Transverse colon (tissue), 4 donors: ENCODE measurements at regions of chr3 and their contacts with region 1.

Region 1: DNA sequence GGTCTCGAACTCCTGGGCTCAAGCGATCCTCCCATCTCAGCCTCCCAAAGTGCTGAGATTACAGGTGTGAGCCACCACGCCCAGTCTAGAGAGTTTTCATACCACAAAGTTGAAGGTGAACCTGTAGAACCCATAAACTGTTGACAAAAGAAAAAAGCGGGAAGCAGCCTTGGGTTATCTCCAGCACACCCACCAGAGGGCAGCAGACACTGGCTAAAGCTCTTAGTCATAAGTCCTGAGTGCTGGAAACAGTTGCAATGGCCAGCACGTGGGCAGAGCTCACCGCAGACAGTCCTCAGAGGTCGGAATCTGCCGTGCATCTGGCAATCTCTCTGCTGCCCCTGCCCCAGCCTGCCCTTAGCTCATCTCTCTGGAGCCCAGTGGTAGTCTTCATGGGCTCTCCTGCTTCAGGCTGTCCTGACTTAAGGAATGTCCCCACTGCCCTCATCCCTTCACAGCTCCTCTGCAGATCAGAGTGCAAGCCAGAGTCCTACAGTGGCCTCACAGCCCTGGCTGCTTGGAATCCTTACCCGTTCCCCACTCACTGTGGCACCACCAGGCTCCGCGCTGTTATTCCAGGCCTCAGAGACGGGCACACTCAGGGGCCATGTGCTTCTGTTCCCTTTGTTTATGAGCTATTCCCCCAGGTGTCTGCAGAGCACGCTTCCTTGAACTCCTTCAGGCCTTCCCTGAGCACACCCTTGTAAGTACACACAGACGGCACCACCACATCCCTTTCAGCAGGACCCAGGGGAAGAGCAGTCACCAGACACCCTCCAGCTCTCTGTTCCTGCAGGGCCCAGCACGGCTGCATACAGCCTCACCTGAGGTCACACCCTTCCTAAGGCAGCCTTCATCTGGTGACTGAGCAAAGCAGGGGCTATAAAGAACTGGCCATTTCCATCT is 8.8 kb upstream of the ELP6 start:
- DNase-seq: peak; percentile 86
- H3K4me3 ChIP-seq: no peak overlapping the region
- H3K27ac ChIP-seq: no peak overlapping the region
- H3K4me1 ChIP-seq: peaks cover 0 to 6% (median 5%) of the 10 kb centered on the region in 4 donors
- H3K27me3 ChIP-seq: no peaks in the 10 kb centered on the region
- CTCF ChIP-seq: peak; percentile 85 to 97 (median 90)
- EP300 ChIP-seq: no peak
- POLR2A ChIP-seq: no peak

Region 2: GRCh38 chr3:47781685-47782445 is 259.5 kb after region 1 on chr3 and contains the start of gene SMARCC1:
- in situ Hi-C with region 1: loop called in 3 of 4 experiments (anchors 5 to 10 kb)
- intact Hi-C with region 1: no loop called
- DNase-seq: peak; percentile 99
- H3K4me3 ChIP-seq: peak within 1 kb of the TSS; percentile 88 to 95 (median 94)
- H3K27ac ChIP-seq: peak within 1 kb of the TSS; percentile 94 to 99 (median 96)
- H3K4me1 ChIP-seq: peaks cover 10 to 34% (median 28%) of the 10 kb centered on the region in 4 donors
- H3K27me3 ChIP-seq: no peaks in the 10 kb centered on the region
- CTCF ChIP-seq: peak in 4 of 5 experiments; percentile 8 to 48 (median 27)
- EP300 ChIP-seq: peak; percentile 5
- POLR2A ChIP-seq: peak; percentile 96
- total RNA-seq, gene SMARCC1: 21.3 to 70.8 (median 45.0) TPM

Region 3: GRCh38 chr3:47791193-47791855 is 269.0 kb after region 1 on chr3:
- in situ Hi-C with region 1: loop called (anchors 5 to 10 kb)
- intact Hi-C with region 1: loop called (anchors 2 kb)
- DNase-seq: no peak
- H3K4me3 ChIP-seq: no peak overlapping the region
- H3K27ac ChIP-seq: no peak overlapping the region
- H3K4me1 ChIP-seq: peaks cover 0 to 9% (median 0%) of the 10 kb centered on the region in 4 donors
- H3K27me3 ChIP-seq: no peaks in the 10 kb centered on the region
- CTCF ChIP-seq: no peak
- EP300 ChIP-seq: no peak
- POLR2A ChIP-seq: no peak

Region 4: GRCh38 chr3:48023377-48023776 is 501.0 kb after region 1 on chr3:
- in situ Hi-C with region 1: no loop called
- intact Hi-C with region 1: no loop called
- DNase-seq: no peak
- H3K4me3 ChIP-seq: no peak overlapping the region
- H3K27ac ChIP-seq: peak overlapping the region in 2 of 4 donors; percentile 6 to 14
- H3K4me1 ChIP-seq: peaks cover 4 to 61% (median 17%) of the 10 kb centered on the region in 4 donors
- H3K27me3 ChIP-seq: no peaks in the 10 kb centered on the region
- CTCF ChIP-seq: no peak
- EP300 ChIP-seq: no peak
- POLR2A ChIP-seq: no peak